CD8-positive, alpha-beta T cell (primary cell): ENCODE measurements at regions of chr3 and their contacts with region 1.

Region 1: DNA sequence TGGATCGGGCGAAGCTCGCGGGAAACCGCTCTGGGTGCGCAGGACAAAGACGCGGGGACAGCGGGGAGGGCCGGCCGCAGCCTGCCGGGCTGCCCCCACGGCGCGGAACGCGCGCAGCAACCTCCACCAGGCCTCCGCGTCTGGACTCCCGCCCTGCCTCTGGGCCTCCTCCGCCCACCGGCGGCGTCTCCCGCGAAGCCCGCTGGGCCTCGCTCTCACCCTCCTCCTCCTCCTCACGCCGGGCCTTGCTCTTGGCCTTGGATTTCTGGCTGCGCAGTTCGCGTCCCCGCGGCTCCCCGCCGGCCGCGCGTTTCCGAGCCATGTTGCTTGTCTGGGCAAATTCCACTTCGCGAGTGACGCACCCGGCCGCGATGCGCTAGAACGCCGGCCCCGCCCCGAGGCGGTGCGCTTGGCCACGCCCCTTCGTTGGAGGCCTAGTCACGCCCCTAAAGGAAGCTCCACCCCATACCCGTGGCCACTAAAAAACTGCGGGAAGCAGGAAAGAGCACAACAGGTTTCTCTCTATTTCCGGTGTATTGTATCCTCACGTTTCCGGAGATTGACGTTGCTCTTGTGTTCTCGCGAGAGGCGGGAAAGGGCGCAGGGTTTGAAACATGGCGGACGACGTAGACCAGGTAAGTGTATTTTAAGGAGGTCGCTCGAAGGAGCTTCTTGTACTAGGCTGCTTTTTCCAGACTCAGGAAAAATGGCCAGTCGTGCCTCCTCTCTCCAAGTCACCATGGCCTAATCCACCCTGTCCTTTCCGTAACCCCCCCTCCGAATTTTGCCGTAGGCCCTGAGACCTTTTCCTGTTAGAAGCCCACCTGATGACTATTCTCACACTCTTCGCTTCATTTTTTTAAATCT is at the starts of genes LSM3 and XPC:
- DNase-seq: peak; percentile 96 to 99 (median 98)
- ATAC-seq: peak; percentile 94
- H3K4me3 ChIP-seq: peak within 1 kb of the TSS; percentile 68
- H3K4me3 Mint-ChIP-seq: peak within 1 kb of the TSS; percentile 96
- H3K27ac ChIP-seq: peak within 1 kb of the TSS; percentile 91 to 99
- H3K27ac Mint-ChIP-seq: peak within 1 kb of the TSS; percentile 99
- H3K4me1 ChIP-seq: peaks cover 49% of the 10 kb centered on the region
- H3K4me1 Mint-ChIP-seq: peaks cover 78% of the 10 kb centered on the region
- H3K27me3 ChIP-seq: no peaks in the 10 kb centered on the region
- H3K27me3 Mint-ChIP-seq: no peaks in the 10 kb centered on the region
- CTCF ChIP-seq: no peak
- total RNA-seq, gene LSM3: 7.5 to 8.3 TPM
- total RNA-seq, gene XPC: 51.5 to 56.5 TPM

Region 2: DNA sequence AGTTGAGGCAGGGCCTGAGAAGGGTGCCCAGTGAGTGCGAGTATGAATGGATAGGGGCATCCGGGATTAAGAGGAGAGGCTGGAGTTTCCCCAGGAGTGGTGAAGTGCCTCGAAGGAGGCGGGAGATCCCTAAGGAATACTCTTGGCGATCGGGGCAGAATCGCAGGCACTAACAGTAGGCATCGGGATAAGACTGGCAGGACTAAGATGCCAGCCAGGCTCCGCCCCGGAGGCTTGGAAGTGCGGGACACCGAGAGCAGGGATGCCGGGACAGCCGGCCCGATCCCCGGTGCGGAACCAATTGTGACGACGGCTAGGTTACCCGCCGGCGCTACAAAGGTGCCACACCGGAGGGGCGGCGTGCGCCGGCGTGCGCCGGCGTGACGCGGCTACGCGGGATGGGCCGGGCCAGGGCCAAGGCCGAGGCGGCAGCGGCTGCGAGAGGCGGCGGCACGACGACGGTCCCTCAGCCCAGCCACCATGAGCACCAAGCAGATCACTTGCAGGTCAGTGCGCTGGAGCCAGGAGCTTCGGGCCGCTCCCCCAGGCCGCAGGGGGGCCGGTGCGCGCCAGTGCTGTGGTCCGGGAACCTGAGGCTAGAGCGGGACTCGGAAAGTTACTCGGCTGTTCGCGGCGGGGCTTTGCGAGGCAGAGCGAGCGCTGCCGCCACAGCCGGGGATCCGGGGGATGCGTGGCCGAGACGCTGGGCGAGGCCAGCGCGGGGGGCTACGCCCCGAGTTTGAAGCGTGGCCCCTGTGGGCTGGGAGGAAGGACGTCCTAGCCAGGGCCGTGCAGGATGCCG is 1621.6 kb before region 1 on chr3 and contains the start of gene MKRN2:
- CTCF ChIA-PET with region 1: no interaction called
- POLR2A ChIA-PET with region 1: no interaction called
- intact Hi-C with region 1: loop called in 1 of 2 experiments (anchors 5 kb)
- DNase-seq: peak; percentile 67 to 94 (median 83)
- ATAC-seq: peak; percentile 93
- H3K4me3 ChIP-seq: peak within 1 kb of the TSS; percentile 73 to 86
- H3K4me3 Mint-ChIP-seq: peak within 1 kb of the TSS; percentile 89
- H3K27ac ChIP-seq: peak within 1 kb of the TSS; percentile 86 to 92
- H3K27ac Mint-ChIP-seq: peak within 1 kb of the TSS; percentile 90
- H3K4me1 ChIP-seq: peaks cover 49% of the 10 kb centered on the region
- H3K4me1 Mint-ChIP-seq: peaks cover 60% of the 10 kb centered on the region
- H3K27me3 ChIP-seq: peaks cover 6 to 16% of the 10 kb centered on the region in 2 experiments
- H3K27me3 Mint-ChIP-seq: peaks cover 24% of the 10 kb centered on the region
- CTCF ChIP-seq: no peak
- total RNA-seq, gene MKRN2: 24.8 to 25.5 TPM

Region 3: GRCh38 chr3:12967606-12968351 is 1210.7 kb before region 1 on chr3:
- CTCF ChIA-PET with region 1: no interaction called
- POLR2A ChIA-PET with region 1: no interaction called
- intact Hi-C with region 1: loop called in 1 of 2 experiments (anchors 2 kb)
- DNase-seq: peak; percentile 82 to 95 (median 89)
- ATAC-seq: peak; percentile 97
- H3K4me3 ChIP-seq: peak overlapping the region; percentile 42 to 63
- H3K4me3 Mint-ChIP-seq: peak overlapping the region; percentile 82
- H3K27ac ChIP-seq: no peak overlapping the region
- H3K27ac Mint-ChIP-seq: peak overlapping the region; percentile 69
- H3K4me1 ChIP-seq: peaks cover 59% of the 10 kb centered on the region
- H3K4me1 Mint-ChIP-seq: peaks cover 74% of the 10 kb centered on the region
- H3K27me3 ChIP-seq: no peaks in the 10 kb centered on the region
- H3K27me3 Mint-ChIP-seq: no peaks in the 10 kb centered on the region
- CTCF ChIP-seq: no peak

Region 4: DNA sequence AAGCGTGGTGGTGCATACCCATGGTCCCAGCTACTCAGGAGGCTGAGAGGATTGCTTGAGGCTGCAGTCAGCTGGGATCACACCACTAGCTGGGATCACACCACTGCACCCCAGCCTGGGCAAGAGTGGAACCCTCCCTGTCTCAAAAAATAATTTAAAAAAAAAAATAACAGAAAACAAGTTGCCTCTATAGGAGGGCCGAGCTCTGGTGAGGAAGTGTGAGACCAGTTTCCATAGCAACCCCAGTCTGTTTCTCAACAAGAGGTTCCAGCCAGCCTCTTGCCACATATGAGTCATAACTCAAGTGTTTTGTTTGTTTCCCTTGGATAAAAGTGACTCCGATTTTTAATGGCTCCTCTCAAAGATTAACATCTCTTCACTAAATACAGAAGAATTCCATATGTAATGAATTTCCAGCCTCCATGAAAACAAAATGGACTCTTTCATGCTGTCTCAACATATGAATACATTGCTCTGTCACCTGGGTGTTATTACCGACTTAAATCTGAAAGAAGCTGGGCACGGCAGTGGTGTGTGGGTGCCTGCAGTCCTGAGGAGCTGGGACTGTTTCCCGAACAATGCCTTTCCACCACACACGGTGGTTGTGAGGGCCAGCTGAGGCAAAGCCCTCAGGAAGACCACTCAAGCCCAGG is 33.9 kb before region 1 on chr3:
- CTCF ChIA-PET with region 1: interaction called, 4 read pairs
- POLR2A ChIA-PET with region 1: interaction called, 27 read pairs
- intact Hi-C with region 1: loop called (anchors 1 kb)
- DNase-seq: peak; percentile 52 to 98 (median 71)
- ATAC-seq: peak; percentile 69
- H3K4me3 ChIP-seq: peak overlapping the region; percentile 15 to 20
- H3K4me3 Mint-ChIP-seq: peak overlapping the region; percentile 66
- H3K27ac ChIP-seq: peak overlapping the region; percentile 95 to 96
- H3K27ac Mint-ChIP-seq: peak overlapping the region; percentile 98
- H3K4me1 ChIP-seq: peaks cover 55% of the 10 kb centered on the region
- H3K4me1 Mint-ChIP-seq: peaks cover 48% of the 10 kb centered on the region
- H3K27me3 ChIP-seq: no peaks in the 10 kb centered on the region
- H3K27me3 Mint-ChIP-seq: no peaks in the 10 kb centered on the region
- CTCF ChIP-seq: no peak

Region 5: GRCh38 chr3:14431892-14432834 is 253.7 kb after region 1 on chr3:
- CTCF ChIA-PET with region 1: no interaction called
- POLR2A ChIA-PET with region 1: interaction called, 5 read pairs
- intact Hi-C with region 1: loop called (anchors 2 kb)
- DNase-seq: peak; percentile 85 to 97 (median 95)
- ATAC-seq: peak; percentile 83
- H3K4me3 ChIP-seq: peak overlapping the region in 1 of 2 experiments; percentile 27
- H3K4me3 Mint-ChIP-seq: peak overlapping the region; percentile 75
- H3K27ac ChIP-seq: peak overlapping the region; percentile 66 to 95
- H3K27ac Mint-ChIP-seq: peak overlapping the region; percentile 99
- H3K4me1 ChIP-seq: peaks cover 75% of the 10 kb centered on the region
- H3K4me1 Mint-ChIP-seq: peaks cover 85% of the 10 kb centered on the region
- H3K27me3 ChIP-seq: no peaks in the 10 kb centered on the region
- H3K27me3 Mint-ChIP-seq: no peaks in the 10 kb centered on the region
- CTCF ChIP-seq: no peak

Region 6: GRCh38 chr3:15064835-15065549 is 886.5 kb after region 1 on chr3 and contains the start of gene MRPS25:
- CTCF ChIA-PET with region 1: no interaction called
- POLR2A ChIA-PET with region 1: no interaction called
- intact Hi-C with region 1: loop called in 1 of 2 experiments (anchors 10 kb)
- DNase-seq: peak; percentile 75 to 94 (median 89)
- ATAC-seq: peak; percentile 98
- H3K4me3 ChIP-seq: peak within 1 kb of the TSS; percentile 89 to 96
- H3K4me3 Mint-ChIP-seq: peak within 1 kb of the TSS; percentile 98
- H3K27ac ChIP-seq: peak within 1 kb of the TSS; percentile 78 to 85
- H3K27ac Mint-ChIP-seq: peak within 1 kb of the TSS; percentile 97
- H3K4me1 ChIP-seq: peaks cover 17% of the 10 kb centered on the region
- H3K4me1 Mint-ChIP-seq: peaks cover 26% of the 10 kb centered on the region
- H3K27me3 ChIP-seq: no peaks in the 10 kb centered on the region
- H3K27me3 Mint-ChIP-seq: no peaks in the 10 kb centered on the region
- CTCF ChIP-seq: no peak
- total RNA-seq, gene MRPS25: 51.3 to 56.2 TPM

Region 7: DNA sequence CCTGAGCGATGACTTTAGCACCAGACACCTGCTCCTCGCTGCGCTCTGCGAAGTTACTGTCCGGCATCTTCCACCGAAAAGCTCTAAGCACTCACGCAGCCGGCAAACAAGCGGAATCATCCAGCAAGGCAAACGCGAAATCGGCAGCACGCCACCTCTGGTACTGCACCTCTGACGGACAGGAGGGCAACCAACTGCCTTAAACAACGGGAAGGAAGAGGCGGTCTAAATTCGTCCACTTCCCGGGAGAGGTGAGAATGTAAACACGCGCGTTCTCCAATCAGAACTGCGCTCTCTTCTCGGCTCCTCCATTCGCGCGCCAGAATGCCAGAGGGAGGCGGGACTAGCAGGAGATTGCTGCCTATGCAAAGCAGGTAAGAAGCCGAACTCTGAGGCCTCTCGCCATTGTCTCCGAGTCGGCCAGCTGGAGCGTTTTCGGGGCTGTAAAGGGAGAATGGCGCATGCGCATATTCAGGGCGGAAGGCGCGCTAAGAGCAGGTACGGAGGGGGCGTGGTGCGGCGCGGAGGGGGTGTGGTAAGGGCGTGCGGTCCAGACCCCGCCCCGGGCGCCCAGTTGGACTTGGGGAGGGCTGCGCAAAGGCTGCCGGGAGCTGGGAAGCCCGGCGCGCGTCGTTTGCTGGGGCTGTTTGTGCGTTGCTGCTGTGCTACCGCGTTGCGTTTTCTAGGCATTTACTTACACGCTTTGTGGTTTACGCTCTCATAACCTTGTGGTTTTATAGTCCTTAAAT is 1423.1 kb after region 1 on chr3 and contains the starts of genes BTD and HACL1:
- CTCF ChIA-PET with region 1: no interaction called
- POLR2A ChIA-PET with region 1: no interaction called
- intact Hi-C with region 1: loop called in 1 of 2 experiments (anchors 2 kb)
- DNase-seq: peak; percentile 96 to 100 (median 99)
- ATAC-seq: peak; percentile 89
- H3K4me3 ChIP-seq: peak within 1 kb of the TSS; percentile 82 to 94
- H3K4me3 Mint-ChIP-seq: peak within 1 kb of the TSS; percentile 100
- H3K27ac ChIP-seq: peak within 1 kb of the TSS; percentile 82 to 88
- H3K27ac Mint-ChIP-seq: peak within 1 kb of the TSS; percentile 99
- H3K4me1 ChIP-seq: peaks cover 19% of the 10 kb centered on the region
- H3K4me1 Mint-ChIP-seq: peaks cover 54% of the 10 kb centered on the region
- H3K27me3 ChIP-seq: no peaks in the 10 kb centered on the region
- H3K27me3 Mint-ChIP-seq: no peaks in the 10 kb centered on the region
- CTCF ChIP-seq: peak; percentile 24
- total RNA-seq, gene BTD: 9.1 to 11.3 TPM
- total RNA-seq, gene HACL1: 30.1 to 33.4 TPM

Region 8: GRCh38 chr3:15845475-15845874 is 1667.0 kb after region 1 on chr3:
- CTCF ChIA-PET with region 1: no interaction called
- POLR2A ChIA-PET with region 1: no interaction called
- intact Hi-C with region 1: no loop called
- DNase-seq: no peak
- ATAC-seq: no peak
- H3K4me3 ChIP-seq: no peak overlapping the region
- H3K4me3 Mint-ChIP-seq: no peak overlapping the region
- H3K27ac ChIP-seq: no peak overlapping the region
- H3K27ac Mint-ChIP-seq: no peak overlapping the region
- H3K4me1 ChIP-seq: no peaks in the 10 kb centered on the region
- H3K4me1 Mint-ChIP-seq: peaks cover 46% of the 10 kb centered on the region
- H3K27me3 ChIP-seq: no peaks in the 10 kb centered on the region
- H3K27me3 Mint-ChIP-seq: no peaks in the 10 kb centered on the region
- CTCF ChIP-seq: no peak